ENCODE measurements at regions of chr21 and their contacts with region 1.

Region 1: GRCh38 chr21:41953831-41954653 is at the start of gene C2CD2:
- DNase-seq: peak in 1 of 2 donors; percentile 83
- H3K4me3 ChIP-seq: peak within 1 kb of the TSS; percentile 96 to 97
- H3K27ac ChIP-seq: peak within 1 kb of the TSS; percentile 86 to 90
- H3K4me1 ChIP-seq: peaks cover 14 to 29% of the 10 kb centered on the region in 2 donors
- H3K27me3 ChIP-seq: no peaks in the 10 kb centered on the region
- CTCF ChIP-seq: no peak
- total RNA-seq, gene C2CD2: 45.0 TPM

Region 2: GRCh38 chr21:40049394-40050290 is 1904.4 kb before region 1 on chr21:
- intact Hi-C with region 1: loop called (anchors 10 kb)
- DNase-seq: peak; percentile 39 to 87
- H3K4me3 ChIP-seq: no peak overlapping the region
- H3K27ac ChIP-seq: peak overlapping the region; percentile 77 to 85
- H3K4me1 ChIP-seq: peaks cover 10 to 46% of the 10 kb centered on the region in 2 donors
- H3K27me3 ChIP-seq: no peaks in the 10 kb centered on the region
- CTCF ChIP-seq: no peak

Region 3: DNA sequence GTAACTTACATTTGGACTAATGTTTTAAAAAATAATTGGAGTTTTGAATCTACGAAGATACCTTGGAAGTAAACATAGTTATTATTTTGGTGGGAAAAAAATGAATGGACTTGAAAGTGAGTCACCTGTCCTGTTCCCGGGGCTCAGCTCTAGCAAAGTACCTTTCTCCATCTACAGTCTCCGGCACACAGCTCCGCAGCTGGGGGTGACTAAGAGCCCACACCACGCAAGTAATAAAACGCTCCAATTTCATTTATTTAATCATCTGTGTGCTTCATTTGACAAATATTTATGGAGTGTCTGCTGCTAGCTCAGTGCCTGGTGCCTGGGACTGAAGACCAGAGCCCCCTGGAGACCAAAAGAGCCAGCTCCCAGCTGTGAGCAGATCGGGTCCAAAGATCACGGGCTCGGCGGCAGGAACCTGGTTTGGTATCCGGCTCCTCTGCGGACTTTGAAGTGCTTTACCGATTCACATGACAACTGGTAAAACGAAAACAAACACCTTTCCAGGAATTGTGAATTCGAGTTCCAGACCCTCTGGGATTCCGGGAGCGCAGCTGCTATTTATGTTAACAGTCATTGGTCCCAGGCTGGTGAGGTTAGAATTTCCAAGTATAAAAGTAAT is 185.5 kb before region 1 on chr21:
- intact Hi-C with region 1: loop called (anchors 5 kb)
- DNase-seq: peak in 1 of 2 donors; percentile 74
- H3K4me3 ChIP-seq: peak overlapping the region; percentile 58 to 60
- H3K27ac ChIP-seq: peak overlapping the region; percentile 74 to 83
- H3K4me1 ChIP-seq: peaks cover 0 to 11% of the 10 kb centered on the region in 2 donors
- H3K27me3 ChIP-seq: no peaks in the 10 kb centered on the region
- CTCF ChIP-seq: peak in 2 of 3 experiments; percentile 15 to 28

Region 4: DNA sequence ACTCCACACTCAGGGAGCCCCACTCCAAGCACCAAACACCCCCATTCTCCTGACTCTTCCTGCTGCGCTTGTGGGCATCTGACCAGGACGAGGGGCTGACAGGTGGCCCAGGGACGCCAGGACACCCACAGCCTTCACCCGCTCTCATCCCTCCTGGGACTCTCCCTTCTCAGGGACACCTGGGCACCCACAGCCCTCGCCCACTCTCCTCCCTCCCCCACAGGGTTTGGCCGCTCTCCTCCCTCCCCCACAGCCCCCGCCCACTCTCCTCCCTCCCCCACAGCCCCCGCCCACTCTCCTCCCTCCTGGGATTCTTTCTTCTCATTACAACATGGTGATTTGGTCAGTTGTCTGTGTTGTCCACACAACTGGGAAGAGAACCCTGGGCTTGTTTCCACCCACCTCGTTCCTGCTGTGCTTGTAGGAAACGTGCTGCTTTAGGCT is 118.3 kb before region 1 on chr21:
- intact Hi-C with region 1: no loop called
- DNase-seq: peak in 1 of 2 donors; percentile 50
- H3K4me3 ChIP-seq: no peak overlapping the region
- H3K27ac ChIP-seq: no peak overlapping the region
- H3K4me1 ChIP-seq: no peaks in the 10 kb centered on the region
- H3K27me3 ChIP-seq: no peaks in the 10 kb centered on the region
- CTCF ChIP-seq: no peak

Region 5: DNA sequence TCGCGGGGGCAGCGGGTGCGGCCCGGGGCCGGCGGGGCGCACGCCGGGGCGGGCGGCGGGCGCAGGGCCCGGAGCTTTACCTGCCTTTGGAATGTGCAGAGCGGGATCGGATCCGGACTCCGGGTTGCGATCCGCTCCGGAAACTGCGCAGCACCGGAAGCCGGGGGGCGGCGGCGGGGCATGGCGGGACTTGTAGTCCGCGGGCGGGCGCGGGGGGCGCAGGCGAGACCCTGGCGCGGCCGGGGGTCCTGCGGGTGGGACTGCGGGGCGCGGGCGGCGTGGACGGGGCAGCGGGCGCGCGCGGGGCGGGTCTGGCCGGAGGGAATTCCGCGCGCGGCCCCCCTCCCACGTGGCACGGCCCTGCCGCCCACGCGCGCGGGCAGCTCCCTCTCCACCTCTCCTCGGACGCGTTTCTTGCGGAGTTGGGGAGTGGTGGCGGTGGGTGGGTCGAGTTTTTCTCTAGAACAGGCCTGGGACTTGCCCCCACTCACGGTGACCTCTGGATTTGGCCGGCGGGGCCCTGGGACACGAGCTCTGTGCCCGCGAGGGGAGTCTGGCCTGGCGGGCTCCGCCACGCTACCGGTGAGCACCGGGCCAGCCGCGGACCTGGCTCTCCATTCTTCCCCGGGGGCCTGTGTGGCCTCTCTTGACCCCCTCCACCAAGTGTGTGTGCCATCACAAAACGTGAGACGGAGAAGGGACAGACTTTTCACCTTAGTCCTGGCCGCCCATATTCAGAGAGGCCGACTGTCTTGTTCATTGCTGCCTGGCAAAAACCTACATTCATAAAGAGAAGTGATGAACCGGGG is 74.6 kb before region 1 on chr21 and contains the start of gene PRDM15:
- intact Hi-C with region 1: loop called (anchors 2 kb)
- DNase-seq: peak in 1 of 2 donors; percentile 88
- H3K4me3 ChIP-seq: peak within 1 kb of the TSS; percentile 87 to 97
- H3K27ac ChIP-seq: peak within 1 kb of the TSS; percentile 73 to 81
- H3K4me1 ChIP-seq: peaks cover 0 to 2% of the 10 kb centered on the region in 2 donors
- H3K27me3 ChIP-seq: no peaks in the 10 kb centered on the region
- CTCF ChIP-seq: no peak
- total RNA-seq, gene PRDM15: 20.5 TPM

Region 6: DNA sequence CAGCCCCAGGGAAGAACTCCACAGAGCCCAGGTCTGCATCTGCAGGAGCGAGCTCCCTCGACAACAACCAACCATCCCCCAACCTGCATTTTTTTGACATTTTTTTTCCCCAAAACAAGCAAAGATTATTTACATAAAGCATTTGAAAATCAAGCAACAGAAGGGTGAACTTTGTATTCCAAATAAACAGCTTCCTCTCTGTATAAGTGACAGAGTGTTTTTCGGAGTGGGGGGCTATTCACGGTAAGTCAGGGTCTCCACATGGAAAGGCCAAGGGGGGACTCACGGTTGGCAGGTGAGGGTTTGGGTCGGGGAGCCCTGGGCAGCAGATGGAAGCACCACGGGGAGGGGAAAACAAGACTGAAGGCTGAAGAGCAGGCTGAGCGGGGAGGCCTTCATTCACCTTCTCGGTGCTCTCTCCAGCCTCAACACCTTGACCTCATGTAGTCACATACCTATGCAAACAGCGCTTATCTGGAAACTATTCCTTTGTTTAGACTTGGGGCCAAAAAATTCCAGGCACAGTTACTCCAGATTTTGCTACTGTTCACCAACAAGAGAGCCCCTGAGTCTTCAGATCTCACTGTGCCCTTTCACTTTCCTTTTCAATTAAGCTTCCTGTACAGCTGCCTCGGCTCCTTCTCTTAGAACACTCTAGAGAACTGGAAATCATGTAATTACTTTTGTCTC is 27.8 kb before region 1 on chr21:
- intact Hi-C with region 1: loop called (anchors 1 kb)
- DNase-seq: no peak
- H3K4me3 ChIP-seq: peak overlapping the region; percentile 39 to 58
- H3K27ac ChIP-seq: peak overlapping the region; percentile 92 to 97
- H3K4me1 ChIP-seq: peaks cover 12 to 35% of the 10 kb centered on the region in 2 donors
- H3K27me3 ChIP-seq: no peaks in the 10 kb centered on the region
- CTCF ChIP-seq: no peak

Region 7: DNA sequence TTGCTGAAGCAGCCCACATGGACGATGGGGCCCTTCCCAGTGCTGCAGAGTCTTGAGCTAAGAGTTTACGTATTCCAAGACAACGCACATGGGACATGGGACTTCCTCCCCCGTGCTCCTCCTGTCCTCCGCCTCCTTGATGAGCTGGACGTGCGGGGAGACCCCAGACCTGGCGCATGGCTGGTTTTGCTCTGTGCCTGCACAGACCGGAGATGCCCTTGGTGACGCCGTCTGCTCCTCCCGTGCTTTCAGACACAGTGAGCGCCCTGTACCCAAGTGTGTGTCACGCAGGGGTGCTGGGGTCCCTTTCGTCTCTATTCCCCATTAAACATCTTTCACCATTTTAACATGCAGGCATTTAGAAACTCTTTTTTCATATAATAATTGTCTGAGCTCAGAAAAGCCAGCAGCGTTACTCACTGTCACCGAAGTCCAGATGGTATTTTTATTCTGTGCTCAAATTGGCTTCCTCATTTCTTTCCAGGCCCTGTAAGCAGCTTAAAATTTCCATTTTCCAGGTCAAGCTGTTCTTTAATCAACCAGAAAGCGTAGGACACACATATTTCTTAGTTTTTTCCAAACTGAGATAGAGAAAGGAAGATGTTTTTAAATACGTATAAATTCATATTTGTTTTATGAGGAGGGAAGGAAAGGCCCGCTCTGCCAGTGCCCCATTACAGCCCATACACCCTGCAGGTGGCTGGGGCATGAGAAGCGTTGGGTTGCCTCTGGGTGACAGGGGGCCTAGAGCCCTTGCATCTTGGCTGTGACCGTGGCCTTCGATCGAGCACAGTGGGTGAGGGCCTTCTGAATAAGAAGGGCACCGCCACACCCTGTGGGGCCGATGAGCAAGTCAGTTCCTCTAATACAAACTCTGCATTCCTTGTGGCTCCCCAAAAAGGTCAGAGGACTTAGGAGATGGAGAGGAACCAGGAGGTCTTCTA is 74.1 kb after region 1 on chr21:
- intact Hi-C with region 1: no loop called
- DNase-seq: peak in 1 of 2 donors; percentile 30
- H3K4me3 ChIP-seq: no peak overlapping the region
- H3K27ac ChIP-seq: peak overlapping the region; percentile 6 to 68
- H3K4me1 ChIP-seq: peaks cover 0 to 3% of the 10 kb centered on the region in 2 donors
- H3K27me3 ChIP-seq: no peaks in the 10 kb centered on the region
- CTCF ChIP-seq: no peak

Region 8: GRCh38 chr21:42047821-42048613 is 94.0 kb after region 1 on chr21:
- intact Hi-C with region 1: loop called (anchors 2 kb)
- DNase-seq: peak; percentile 80 to 96
- H3K4me3 ChIP-seq: no peak overlapping the region
- H3K27ac ChIP-seq: peak overlapping the region; percentile 88 to 90
- H3K4me1 ChIP-seq: peaks cover 4 to 20% of the 10 kb centered on the region in 2 donors
- H3K27me3 ChIP-seq: no peaks in the 10 kb centered on the region
- CTCF ChIP-seq: peak in 2 of 3 experiments; percentile 8 to 27

Region 9: GRCh38 chr21:42056996-42057689 is 103.1 kb after region 1 on chr21:
- intact Hi-C with region 1: loop called (anchors 1 kb)
- DNase-seq: peak in 1 of 2 donors; percentile 92
- H3K4me3 ChIP-seq: peak overlapping the region in 1 of 2 donors; percentile 41
- H3K27ac ChIP-seq: peak overlapping the region; percentile 87 to 94
- H3K4me1 ChIP-seq: peaks cover 4 to 21% of the 10 kb centered on the region in 2 donors
- H3K27me3 ChIP-seq: no peaks in the 10 kb centered on the region
- CTCF ChIP-seq: no peak

Measured in ascending aorta (tissue), 2 donors.